GM18951 (cell line): ENCODE measurements at regions of chrX and their contacts with region 1.

Region 1: DNA sequence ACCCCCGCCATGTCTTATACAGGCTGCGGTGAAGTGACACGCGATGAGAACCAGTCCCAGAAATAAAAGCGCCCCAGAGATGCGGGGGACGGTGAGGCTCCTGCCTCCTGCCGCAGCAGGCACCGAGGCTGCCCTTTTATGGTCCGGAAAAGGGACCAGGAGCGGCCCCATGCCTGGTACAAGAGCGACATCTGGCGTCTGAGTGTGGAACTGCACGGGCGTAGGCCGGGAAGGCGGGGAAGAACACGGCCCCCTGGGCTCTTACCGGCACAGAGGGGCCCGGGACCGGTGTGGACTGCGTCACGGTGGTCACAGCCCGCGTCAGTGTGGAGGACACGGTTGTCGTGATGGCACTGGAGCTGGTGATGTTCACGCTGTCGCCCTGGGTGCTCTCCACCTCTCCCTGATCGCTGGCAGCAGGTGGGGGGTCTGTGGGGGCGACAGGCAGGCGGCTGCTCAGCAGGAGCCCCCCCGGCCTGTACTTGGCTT is 8.9 kb upstream of the RENBP start:
- POLR2A ChIP-seq: peak; percentile 29

Region 2: DNA sequence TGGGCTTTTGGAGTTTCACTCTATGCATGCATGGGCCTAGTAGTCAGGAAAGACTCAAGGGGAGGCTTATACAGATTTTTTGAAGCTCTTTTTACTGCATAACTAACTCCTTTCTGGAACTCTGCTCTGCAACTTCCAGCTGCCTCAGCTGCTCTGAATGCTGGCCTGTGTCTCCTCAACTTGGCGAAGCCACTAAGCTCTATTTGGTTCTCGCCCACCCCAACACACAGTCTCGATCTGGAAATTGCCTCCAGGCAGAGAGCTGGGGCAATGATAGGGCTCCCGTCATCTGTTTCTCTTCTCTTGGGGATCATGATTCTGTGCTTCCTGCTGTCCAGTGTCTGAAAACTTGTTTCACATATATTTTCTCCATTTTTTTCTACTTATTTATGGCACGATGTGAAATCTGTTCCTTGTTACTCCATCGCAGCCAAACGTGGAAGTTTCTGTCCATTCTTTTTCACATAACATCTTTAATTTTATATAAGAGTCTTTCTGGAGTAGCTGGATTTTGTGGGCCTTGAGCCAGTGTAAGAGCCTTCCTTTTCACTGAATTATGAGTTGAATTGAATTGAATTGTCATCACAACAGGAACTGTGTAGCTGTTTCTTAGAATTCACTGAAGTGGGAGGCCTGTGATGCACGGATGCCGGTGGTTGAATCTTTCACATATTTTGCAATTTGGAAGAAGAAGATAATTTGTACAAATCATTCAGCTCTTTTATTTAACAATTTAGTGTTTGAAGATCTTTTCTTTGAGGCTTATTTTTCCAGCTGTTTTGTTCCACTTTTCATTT is 610.4 kb before region 1 on chrX:
- in situ Hi-C with region 1: no loop called
- POLR2A ChIP-seq: no peak

Region 3: DNA sequence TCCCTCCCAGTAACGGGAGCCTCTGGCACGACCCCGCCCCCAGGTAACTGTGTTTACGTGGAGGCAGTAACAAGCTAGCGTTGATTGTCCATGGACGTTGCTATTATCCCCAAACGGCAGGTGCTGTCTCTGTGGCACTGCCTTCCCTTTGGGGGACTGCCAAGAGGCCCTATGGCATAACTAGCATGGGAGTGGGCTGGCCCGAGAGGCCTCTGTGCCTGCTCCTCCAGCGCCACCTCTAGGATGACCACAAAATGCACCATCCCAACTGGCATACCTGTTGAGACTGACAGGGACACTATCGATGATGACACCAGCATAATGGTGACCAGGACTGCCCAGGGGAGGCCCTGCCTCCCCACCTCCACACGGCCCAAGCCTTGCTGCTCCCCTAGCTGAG is 171.1 kb before region 1 on chrX:
- in situ Hi-C with region 1: loop called (anchors 10 kb)
- POLR2A ChIP-seq: no peak